Aorta (tissue), 5 donors: ENCODE measurements at regions of chr17 and their contacts with region 1.

Region 1: GRCh38 chr17:6639586-6640535 is 650 bp downstream of the KIAA0753 start:
- DNase-seq: peak; percentile 63 to 78
- ATAC-seq: peak; percentile 65
- H3K4me3 ChIP-seq: peak overlapping the region; percentile 60 to 63
- H3K27ac ChIP-seq: no peak overlapping the region
- H3K4me1 ChIP-seq: no peaks in the 10 kb centered on the region
- H3K27me3 ChIP-seq: no peaks in the 10 kb centered on the region

Region 2: DNA sequence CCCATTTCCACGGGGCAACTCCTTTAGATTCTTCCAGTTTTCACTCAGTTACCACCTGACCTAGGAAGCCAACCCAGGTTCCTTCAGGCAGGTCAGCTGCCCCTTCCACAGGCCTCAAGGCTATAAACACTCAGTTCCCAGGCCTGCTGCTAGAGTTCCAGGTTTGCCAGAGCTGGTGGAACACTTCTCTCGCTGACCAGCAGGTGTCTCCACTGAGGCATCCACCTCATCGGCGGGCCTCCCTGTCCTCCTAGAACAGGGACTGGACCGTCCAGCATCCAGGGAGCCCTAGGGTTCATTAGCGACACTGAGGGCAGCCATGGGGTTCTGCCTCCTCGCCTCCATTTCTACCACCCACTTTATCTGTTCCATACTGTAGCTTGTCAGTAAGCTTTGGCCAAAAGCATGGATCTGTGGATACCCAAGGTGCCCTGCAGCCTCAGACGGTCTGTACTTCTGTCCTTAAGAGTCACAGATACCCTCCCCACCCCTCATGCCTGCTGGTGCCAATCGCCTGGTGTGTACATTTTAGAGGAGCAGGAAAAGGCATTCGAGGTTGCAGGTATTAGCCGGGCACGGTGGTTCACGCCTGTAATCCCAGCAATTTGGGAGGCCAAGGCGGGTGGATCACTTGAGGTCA is 166.6 kb before region 1 on chr17:
- intact Hi-C with region 1: loop called in 1 of 2 experiments (anchors 10 kb)
- DNase-seq: peak; percentile 81 to 85
- ATAC-seq: peak; percentile 78
- H3K4me3 ChIP-seq: no peak overlapping the region
- H3K27ac ChIP-seq: no peak overlapping the region
- H3K4me1 ChIP-seq: no peaks in the 10 kb centered on the region
- H3K27me3 ChIP-seq: no peaks in the 10 kb centered on the region